Naive thymus-derived CD4-positive, alpha-beta T cell (primary cell): ENCODE measurements at regions of chr2 and their contacts with region 1.

Region 1: DNA sequence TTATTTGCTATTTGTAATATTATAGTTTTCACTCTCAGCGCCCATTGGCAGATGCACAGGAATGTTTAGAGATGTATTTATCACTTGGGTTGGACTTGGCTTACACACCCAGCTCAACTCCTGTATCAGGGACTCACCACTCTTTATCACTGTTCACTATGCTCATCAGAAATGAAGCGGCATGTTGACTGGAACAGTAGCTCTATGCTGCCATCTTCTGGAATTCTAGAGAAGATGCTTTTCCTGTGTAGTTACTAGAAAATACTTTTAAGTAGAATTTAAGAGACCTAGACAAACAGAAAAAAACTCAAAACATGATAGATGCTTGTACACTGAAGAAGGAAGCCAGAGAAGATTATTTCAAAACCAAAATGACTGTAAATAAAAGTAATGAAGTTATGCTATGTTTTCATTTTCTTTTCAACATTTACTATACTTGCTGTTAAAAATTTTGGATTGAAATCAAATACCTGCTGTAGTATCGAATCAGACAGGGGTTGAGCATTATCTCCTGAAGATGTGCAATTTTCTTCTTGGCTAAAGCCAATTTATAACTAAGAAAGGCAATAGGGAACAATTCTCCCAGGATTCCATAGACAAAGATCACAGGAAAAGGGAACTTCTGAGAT is 47.4 kb upstream of the NXPH2 start:
- DNase-seq: peak in 6 of 9 donors; percentile 12 to 56 (median 42)
- ATAC-seq: peak; percentile 67
- H3K4me3 ChIP-seq: no peak overlapping the region
- H3K4me3 Mint-ChIP-seq: no peak overlapping the region
- H3K27ac ChIP-seq: no peak overlapping the region
- H3K27ac Mint-ChIP-seq: no peak overlapping the region
- H3K4me1 ChIP-seq: no peaks in the 10 kb centered on the region
- H3K4me1 Mint-ChIP-seq: peaks cover 0 to 3% (median 0%) of the 10 kb centered on the region in 7 donors
- H3K27me3 ChIP-seq: no peaks in the 10 kb centered on the region
- H3K27me3 Mint-ChIP-seq: peaks cover 0 to 17% (median 5%) of the 10 kb centered on the region in 5 donors

Region 2: DNA sequence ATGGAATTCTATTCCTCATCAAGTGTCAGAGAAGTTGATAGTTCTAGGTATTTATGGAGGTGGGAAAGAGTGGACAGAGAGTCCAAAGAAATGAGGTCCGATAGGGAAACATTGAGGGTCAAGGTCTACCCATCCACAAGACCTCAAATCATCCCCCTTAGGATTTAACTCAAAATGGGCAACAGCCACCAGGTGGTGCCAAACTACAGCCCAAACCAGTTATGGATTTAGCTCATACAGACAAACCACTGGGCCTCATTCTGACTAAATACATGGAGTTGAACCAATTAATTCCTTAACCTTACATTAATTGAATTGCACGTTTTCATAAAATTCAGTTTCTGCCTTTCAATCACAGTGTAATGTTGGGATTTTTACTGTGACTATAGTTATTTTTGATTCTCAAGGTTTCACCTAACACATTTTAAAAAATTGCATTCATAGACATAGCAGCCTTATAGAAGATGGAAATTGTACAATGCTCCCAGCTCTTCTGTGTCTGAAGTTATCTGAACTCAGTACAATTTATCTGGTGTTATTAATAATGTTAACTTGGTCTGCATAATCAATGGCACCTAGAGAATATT is 961.5 kb before region 1 on chr2:
- CTCF ChIA-PET with region 1: interaction called, 17 read pairs
- POLR2A ChIA-PET with region 1: no interaction called
- intact Hi-C with region 1: loop called (anchors 1 kb)
- DNase-seq: peak in 8 of 9 donors; percentile 2 to 40 (median 22)
- ATAC-seq: no peak
- H3K4me3 ChIP-seq: no peak overlapping the region
- H3K4me3 Mint-ChIP-seq: no peak overlapping the region
- H3K27ac ChIP-seq: no peak overlapping the region
- H3K27ac Mint-ChIP-seq: no peak overlapping the region
- H3K4me1 ChIP-seq: no peaks in the 10 kb centered on the region
- H3K4me1 Mint-ChIP-seq: no peaks in the 10 kb centered on the region
- H3K27me3 ChIP-seq: no peaks in the 10 kb centered on the region
- H3K27me3 Mint-ChIP-seq: peaks cover 0 to 9% (median 6%) of the 10 kb centered on the region in 5 donors

Region 3: DNA sequence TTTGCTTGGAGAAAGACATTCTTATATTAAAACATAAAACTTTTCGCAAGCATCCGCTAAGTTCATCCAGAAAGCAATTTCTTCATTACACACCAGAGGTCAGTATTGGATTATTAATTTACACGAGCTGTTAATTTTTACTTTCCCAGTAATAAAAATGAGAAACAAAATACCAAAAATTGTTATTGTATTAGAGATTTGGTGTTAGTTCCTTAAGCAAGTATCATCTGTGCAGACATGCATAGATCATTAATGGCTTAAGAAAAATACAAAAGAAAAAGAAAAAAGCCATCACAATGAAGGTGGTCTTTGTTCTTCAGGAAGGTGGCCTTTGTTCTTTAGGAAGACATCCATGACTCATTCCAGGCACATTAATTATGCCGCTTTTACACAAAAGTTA is 916.9 kb before region 1 on chr2:
- CTCF ChIA-PET with region 1: interaction called, 4 read pairs
- POLR2A ChIA-PET with region 1: no interaction called
- intact Hi-C with region 1: loop called (anchors 1 kb)
- DNase-seq: no peak
- ATAC-seq: no peak
- H3K4me3 ChIP-seq: no peak overlapping the region
- H3K4me3 Mint-ChIP-seq: no peak overlapping the region
- H3K27ac ChIP-seq: no peak overlapping the region
- H3K27ac Mint-ChIP-seq: no peak overlapping the region
- H3K4me1 ChIP-seq: no peaks in the 10 kb centered on the region
- H3K4me1 Mint-ChIP-seq: no peaks in the 10 kb centered on the region
- H3K27me3 ChIP-seq: no peaks in the 10 kb centered on the region
- H3K27me3 Mint-ChIP-seq: peaks cover 0 to 27% (median 3%) of the 10 kb centered on the region in 5 donors

Region 4: GRCh38 chr2:137947728-137948336 is 879.7 kb before region 1 on chr2:
- CTCF ChIA-PET with region 1: no interaction called
- POLR2A ChIA-PET with region 1: no interaction called
- intact Hi-C with region 1: loop called (anchors 1 kb)
- DNase-seq: peak in 2 of 9 donors; percentile 2 to 6
- ATAC-seq: no peak
- H3K4me3 ChIP-seq: no peak overlapping the region
- H3K4me3 Mint-ChIP-seq: no peak overlapping the region
- H3K27ac ChIP-seq: no peak overlapping the region
- H3K27ac Mint-ChIP-seq: no peak overlapping the region
- H3K4me1 ChIP-seq: no peaks in the 10 kb centered on the region
- H3K4me1 Mint-ChIP-seq: peaks cover 0 to 7% (median 5%) of the 10 kb centered on the region in 7 donors
- H3K27me3 ChIP-seq: no peaks in the 10 kb centered on the region
- H3K27me3 Mint-ChIP-seq: peaks cover 0 to 9% (median 3%) of the 10 kb centered on the region in 5 donors

Region 5: DNA sequence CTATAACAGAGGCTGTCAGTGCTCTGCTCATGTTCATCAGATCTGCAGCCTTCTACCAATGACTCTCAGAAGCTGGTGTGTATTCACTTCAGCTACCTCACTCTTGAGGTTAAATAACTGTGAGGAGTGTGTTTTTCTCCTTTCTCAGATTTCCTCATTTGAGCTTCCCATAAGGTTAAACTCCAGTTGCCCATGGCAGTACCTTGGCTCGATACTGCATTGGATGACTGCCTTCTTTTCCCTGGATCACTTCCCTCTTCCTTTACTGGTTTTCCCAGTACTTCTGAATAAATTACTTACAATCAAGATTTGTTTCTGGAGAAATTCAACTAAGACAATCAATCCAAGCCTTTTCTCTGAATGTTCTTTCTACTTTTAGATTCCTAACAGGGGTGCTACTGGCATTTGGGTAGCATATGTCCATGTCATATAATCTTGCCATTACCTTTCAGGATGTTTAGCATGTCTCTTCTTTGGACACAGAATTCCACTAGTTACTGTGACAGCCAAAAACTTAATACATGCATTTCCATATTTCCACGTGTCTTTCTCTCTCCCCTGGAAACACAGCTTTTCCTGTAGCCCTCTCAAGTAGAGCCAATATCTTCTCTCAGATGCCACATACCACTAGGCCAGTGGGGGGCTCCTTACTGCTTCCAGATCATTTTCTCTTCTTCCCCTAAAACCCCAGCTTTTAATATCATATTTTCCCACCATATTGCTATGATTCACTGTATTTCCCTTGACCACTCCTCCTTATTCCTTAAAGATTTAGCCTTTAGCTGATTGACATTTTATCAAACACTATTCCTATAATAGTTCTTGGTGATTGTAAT is 341.0 kb before region 1 on chr2:
- CTCF ChIA-PET with region 1: no interaction called
- POLR2A ChIA-PET with region 1: no interaction called
- intact Hi-C with region 1: loop called in 1 of 2 experiments (anchors 1 kb)
- DNase-seq: no peak
- ATAC-seq: no peak
- H3K4me3 ChIP-seq: no peak overlapping the region
- H3K4me3 Mint-ChIP-seq: no peak overlapping the region
- H3K27ac ChIP-seq: no peak overlapping the region
- H3K27ac Mint-ChIP-seq: no peak overlapping the region
- H3K4me1 ChIP-seq: no peaks in the 10 kb centered on the region
- H3K4me1 Mint-ChIP-seq: no peaks in the 10 kb centered on the region
- H3K27me3 ChIP-seq: no peaks in the 10 kb centered on the region
- H3K27me3 Mint-ChIP-seq: peaks cover 0 to 6% (median 0%) of the 10 kb centered on the region in 5 donors